AG04449 (cell line): ENCODE measurements at regions of chr11 and their contacts with region 1.

Region 1: DNA sequence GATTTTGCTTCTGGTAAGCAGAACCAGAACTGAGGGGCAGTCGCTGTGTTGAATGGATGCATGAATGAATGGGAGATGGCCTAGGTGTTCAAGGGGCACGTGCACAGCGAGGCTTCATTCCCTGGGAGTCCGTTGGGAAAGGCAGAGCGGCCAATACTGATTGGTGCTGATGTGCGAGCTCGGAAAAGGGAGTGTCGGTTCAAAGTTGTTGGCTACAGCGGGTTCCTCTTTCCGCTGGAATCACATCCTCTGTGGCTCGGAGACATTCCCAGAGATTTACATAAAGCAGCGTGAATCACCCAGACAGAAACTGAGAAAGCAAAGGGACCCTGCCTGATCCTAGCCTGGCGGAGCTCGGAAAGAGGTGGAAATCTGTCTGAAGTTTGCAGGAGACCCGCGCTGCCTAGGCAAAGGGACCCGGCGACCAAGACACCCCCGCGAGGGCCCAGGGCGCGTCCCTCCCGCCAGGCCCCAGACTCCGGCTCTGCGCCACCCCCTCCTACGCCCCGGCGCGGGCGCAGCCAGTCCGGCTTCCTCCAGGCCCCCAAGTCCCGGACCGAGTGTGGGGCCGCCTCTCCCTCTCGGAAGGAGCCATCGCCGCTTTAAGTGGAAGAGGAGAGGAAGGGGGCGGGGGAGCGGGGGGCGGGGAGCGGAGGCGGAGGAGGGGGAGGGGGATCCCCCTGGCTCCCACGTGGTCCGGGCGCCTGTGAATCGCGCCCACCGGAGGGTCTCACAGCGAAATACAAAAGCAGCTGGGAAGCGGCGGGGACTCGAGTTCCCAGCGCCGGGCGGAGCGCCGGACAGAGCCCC is at the start of gene FJX1:
- DNase-seq: no peak
- H3K4me3 ChIP-seq: peak within 1 kb of the TSS; percentile 69
- CTCF ChIP-seq: no peak

Region 2: GRCh38 chr11:35605711-35606110 is 12.2 kb before region 1 on chr11:
- CTCF ChIA-PET with region 1: interaction called, 19 read pairs
- POLR2A ChIA-PET with region 1: no interaction called
- DNase-seq: no peak
- H3K4me3 ChIP-seq: no peak overlapping the region
- CTCF ChIP-seq: no peak